CD8-positive, alpha-beta T cell (primary cell): ENCODE measurements at regions of chr17 and their contacts with region 1.

Region 1: GRCh38 chr17:44324571-44325275 is at the start of gene SLC25A39:
- DNase-seq: peak; percentile 90 to 98 (median 96)
- ATAC-seq: peak; percentile 72
- H3K4me3 ChIP-seq: peak within 1 kb of the TSS; percentile 84 to 91
- H3K4me3 Mint-ChIP-seq: peak within 1 kb of the TSS; percentile 88
- H3K27ac ChIP-seq: peak within 1 kb of the TSS; percentile 88 to 93
- H3K27ac Mint-ChIP-seq: peak within 1 kb of the TSS; percentile 96
- H3K4me1 ChIP-seq: peaks cover 14% of the 10 kb centered on the region
- H3K4me1 Mint-ChIP-seq: peaks cover 30% of the 10 kb centered on the region
- H3K27me3 ChIP-seq: no peaks in the 10 kb centered on the region
- H3K27me3 Mint-ChIP-seq: no peaks in the 10 kb centered on the region
- CTCF ChIP-seq: no peak
- total RNA-seq, gene SLC25A39: 73.1 to 77.7 TPM

Region 2: GRCh38 chr17:44258811-44259351 is 65.8 kb before region 1 on chr17:
- CTCF ChIA-PET with region 1: no interaction called
- POLR2A ChIA-PET with region 1: no interaction called
- intact Hi-C with region 1: no loop called
- DNase-seq: no peak
- ATAC-seq: no peak
- H3K4me3 ChIP-seq: no peak overlapping the region
- H3K4me3 Mint-ChIP-seq: no peak overlapping the region
- H3K27ac ChIP-seq: no peak overlapping the region
- H3K27ac Mint-ChIP-seq: no peak overlapping the region
- H3K4me1 ChIP-seq: no peaks in the 10 kb centered on the region
- H3K4me1 Mint-ChIP-seq: no peaks in the 10 kb centered on the region
- H3K27me3 ChIP-seq: no peaks in the 10 kb centered on the region
- H3K27me3 Mint-ChIP-seq: no peaks in the 10 kb centered on the region
- CTCF ChIP-seq: no peak

Region 3: GRCh38 chr17:44293509-44294226 is 31.1 kb before region 1 on chr17:
- CTCF ChIA-PET with region 1: no interaction called
- POLR2A ChIA-PET with region 1: no interaction called
- intact Hi-C with region 1: loop called in 1 of 2 experiments (anchors 1 kb)
- DNase-seq: no peak
- ATAC-seq: no peak
- H3K4me3 ChIP-seq: no peak overlapping the region
- H3K4me3 Mint-ChIP-seq: no peak overlapping the region
- H3K27ac ChIP-seq: no peak overlapping the region
- H3K27ac Mint-ChIP-seq: no peak overlapping the region
- H3K4me1 ChIP-seq: no peaks in the 10 kb centered on the region
- H3K4me1 Mint-ChIP-seq: no peaks in the 10 kb centered on the region
- H3K27me3 ChIP-seq: no peaks in the 10 kb centered on the region
- H3K27me3 Mint-ChIP-seq: peaks cover 2% of the 10 kb centered on the region
- CTCF ChIP-seq: no peak

Region 4: GRCh38 chr17:44308320-44308818 is 16.4 kb before region 1 on chr17 and contains the start of gene RUNDC3A:
- CTCF ChIA-PET with region 1: no interaction called
- POLR2A ChIA-PET with region 1: interaction called, 4 read pairs
- intact Hi-C with region 1: loop called (anchors 1 kb)
- DNase-seq: peak; percentile 78 to 92 (median 87)
- ATAC-seq: peak; percentile 94
- H3K4me3 ChIP-seq: peak within 1 kb of the TSS; percentile 33 to 41
- H3K4me3 Mint-ChIP-seq: peak within 1 kb of the TSS; percentile 62
- H3K27ac ChIP-seq: no peak within 1 kb of the TSS
- H3K27ac Mint-ChIP-seq: no peak within 1 kb of the TSS
- H3K4me1 ChIP-seq: peaks cover 14% of the 10 kb centered on the region
- H3K4me1 Mint-ChIP-seq: peaks cover 19% of the 10 kb centered on the region
- H3K27me3 ChIP-seq: peaks cover 4 to 10% of the 10 kb centered on the region in 2 experiments
- H3K27me3 Mint-ChIP-seq: peaks cover 36% of the 10 kb centered on the region
- CTCF ChIP-seq: no peak
- total RNA-seq, gene RUNDC3A: 0.19 TPM in 1 of 2 experiments, not detected in the other